WTC11 (cell line): ENCODE measurements at regions of chr11 and their contacts with region 1.

Region 1: DNA sequence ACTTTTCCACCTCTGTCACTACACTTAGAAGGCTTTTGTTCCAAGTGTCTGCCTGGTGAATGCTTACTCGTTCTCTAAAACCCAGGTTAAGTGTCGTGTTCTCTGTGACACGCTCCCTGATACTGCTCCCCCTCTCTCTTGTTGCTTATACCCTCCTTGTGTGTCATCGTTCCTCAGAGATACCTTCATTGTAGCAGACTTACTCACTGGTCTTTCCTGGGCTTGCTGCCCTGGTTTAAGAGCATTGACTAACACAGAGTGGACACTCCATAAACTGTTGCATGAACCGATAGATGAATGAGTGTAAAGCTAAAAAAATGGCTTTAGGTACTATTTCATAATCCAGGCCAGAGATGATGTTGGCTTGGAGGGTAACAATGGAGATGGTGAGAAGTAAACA is 171.3 kb downstream of the GRIK4 start:
- DNase-seq: no peak
- ATAC-seq: no peak
- H3K4me3 Mint-ChIP-seq: no peak overlapping the region
- H3K27ac Mint-ChIP-seq: no peak overlapping the region
- H3K4me1 Mint-ChIP-seq: peaks cover 22% of the 10 kb centered on the region
- H3K27me3 Mint-ChIP-seq: no peaks in the 10 kb centered on the region
- CTCF ChIP-seq: no peak

Region 2: GRCh38 chr11:120517390-120517761 is 165.5 kb before region 1 on chr11:
- CTCF ChIA-PET with region 1: interaction called, 15 read pairs
- POLR2A ChIA-PET with region 1: no interaction called
- DNase-seq: no peak
- ATAC-seq: peak; percentile 17
- H3K4me3 Mint-ChIP-seq: no peak overlapping the region
- H3K27ac Mint-ChIP-seq: peak overlapping the region; percentile 48; the same call in 1 of the 2 replicates
- H3K4me1 Mint-ChIP-seq: peaks cover 29% of the 10 kb centered on the region
- H3K27me3 Mint-ChIP-seq: peaks cover 15% of the 10 kb centered on the region
- CTCF ChIP-seq: no peak

Region 3: DNA sequence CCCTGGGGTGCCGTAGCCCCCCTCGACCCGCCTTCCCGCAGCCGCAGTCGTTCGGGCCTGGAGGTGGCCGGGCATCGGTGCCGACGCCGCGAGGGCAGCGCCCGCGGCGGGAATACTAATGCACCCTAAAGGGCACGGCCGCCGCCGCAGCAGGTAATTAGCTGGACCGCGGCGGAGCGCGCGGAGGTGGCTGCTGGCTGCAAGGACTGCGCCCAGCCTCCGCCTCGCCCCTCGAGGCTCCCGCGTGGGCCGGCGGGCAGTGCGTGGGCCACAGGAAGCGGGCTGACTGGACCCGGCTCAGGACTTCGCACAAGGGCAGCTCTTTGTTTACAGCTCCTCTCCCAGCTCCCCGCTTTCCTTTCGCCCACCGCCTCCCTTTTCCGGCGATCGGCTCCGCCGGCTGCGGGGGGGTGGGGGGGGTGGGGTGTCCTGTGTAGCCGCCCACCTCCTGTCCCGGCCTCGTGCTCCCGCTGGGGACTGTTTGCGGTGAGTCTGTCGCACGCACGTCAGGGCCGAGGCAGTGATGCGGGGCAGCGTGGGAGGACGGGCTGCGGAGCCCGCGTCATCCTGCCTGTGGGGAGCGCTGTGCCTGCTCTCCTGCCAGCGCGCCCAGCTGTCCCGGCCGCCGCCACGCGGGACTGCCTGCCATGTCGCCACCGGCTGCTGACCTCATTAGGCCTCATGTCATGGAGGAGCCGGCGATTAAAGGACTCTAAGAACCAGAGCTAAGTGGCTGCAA is 118.1 kb before region 1 on chr11:
- CTCF ChIA-PET with region 1: interaction called, 25 read pairs
- POLR2A ChIA-PET with region 1: no interaction called
- DNase-seq: peak; percentile 38
- ATAC-seq: peak; percentile 11
- H3K4me3 Mint-ChIP-seq: peak overlapping the region; percentile 58
- H3K27ac Mint-ChIP-seq: no peak overlapping the region
- H3K4me1 Mint-ChIP-seq: peaks cover 42% of the 10 kb centered on the region
- H3K27me3 Mint-ChIP-seq: peaks cover 38% of the 10 kb centered on the region
- CTCF ChIP-seq: no peak

Region 4: GRCh38 chr11:120579611-120580031 is 103.2 kb before region 1 on chr11:
- CTCF ChIA-PET with region 1: no interaction called
- POLR2A ChIA-PET with region 1: no interaction called
- DNase-seq: no peak
- ATAC-seq: no peak
- H3K4me3 Mint-ChIP-seq: no peak overlapping the region
- H3K27ac Mint-ChIP-seq: no peak overlapping the region
- H3K4me1 Mint-ChIP-seq: peaks cover 31% of the 10 kb centered on the region
- H3K27me3 Mint-ChIP-seq: peaks cover 6% of the 10 kb centered on the region; the same call in 1 of the 2 replicates
- CTCF ChIP-seq: no peak

Region 5: GRCh38 chr11:120667281-120667680 is 15.6 kb before region 1 on chr11:
- CTCF ChIA-PET with region 1: interaction called, 67 read pairs
- POLR2A ChIA-PET with region 1: interaction called, 4 read pairs
- DNase-seq: no peak
- ATAC-seq: peak; percentile 32
- H3K4me3 Mint-ChIP-seq: no peak overlapping the region
- H3K27ac Mint-ChIP-seq: no peak overlapping the region
- H3K4me1 Mint-ChIP-seq: peaks cover 15% of the 10 kb centered on the region
- H3K27me3 Mint-ChIP-seq: no peaks in the 10 kb centered on the region; the same call in 1 of the 2 replicates
- CTCF ChIP-seq: no peak

Region 6: GRCh38 chr11:120801801-120802689 is 119.2 kb after region 1 on chr11:
- CTCF ChIA-PET with region 1: interaction called, 14 read pairs
- POLR2A ChIA-PET with region 1: no interaction called
- DNase-seq: peak; percentile 83
- ATAC-seq: peak; percentile 83
- H3K4me3 Mint-ChIP-seq: no peak overlapping the region
- H3K27ac Mint-ChIP-seq: no peak overlapping the region
- H3K4me1 Mint-ChIP-seq: peaks cover 22% of the 10 kb centered on the region
- H3K27me3 Mint-ChIP-seq: no peaks in the 10 kb centered on the region; the same call in 1 of the 2 replicates
- CTCF ChIP-seq: peak; percentile 97